Left cardiac atrium (tissue), 4 donors: ENCODE measurements at regions of chr2 and their contacts with region 1.

Region 1: DNA sequence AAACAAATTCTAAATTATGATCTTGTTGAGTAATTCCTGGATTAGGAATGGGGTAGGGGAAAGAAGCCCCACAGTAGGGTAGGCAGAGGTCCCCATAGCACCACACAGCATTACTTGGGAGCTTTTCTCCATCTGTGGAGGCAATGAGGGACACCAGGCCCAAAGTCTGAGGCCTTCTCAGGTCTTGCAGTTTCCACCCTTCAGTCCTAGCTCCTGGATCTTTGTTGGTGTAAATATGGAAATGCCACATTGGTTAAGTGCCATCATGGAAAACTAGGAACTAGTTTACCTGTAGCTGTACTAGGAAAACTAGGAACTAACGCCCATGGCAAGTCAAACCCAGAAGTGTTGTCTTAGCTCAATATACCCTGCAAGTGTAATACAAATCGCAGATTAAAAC is 113.3 kb upstream of the DAPL1 start:
- DNase-seq: no peak
- ATAC-seq: no peak

Region 2: GRCh38 chr2:158745044-158745865 is 63.4 kb after region 1 on chr2:
- intact Hi-C with region 1: loop called in 1 of 2 experiments (anchors 5 kb)
- DNase-seq: peak; percentile 56
- ATAC-seq: peak; percentile 54 to 57

Region 3: GRCh38 chr2:158761621-158762020 is 79.8 kb after region 1 on chr2:
- intact Hi-C with region 1: no loop called
- DNase-seq: no peak
- ATAC-seq: no peak

Region 4: GRCh38 chr2:158984604-158985135 is 302.9 kb after region 1 on chr2:
- intact Hi-C with region 1: no loop called
- DNase-seq: peak; percentile 46
- ATAC-seq: peak; percentile 90 to 92